CD8-positive, alpha-beta memory T cell (primary cell): ENCODE measurements at regions of chr3 and their contacts with region 1.

Region 1: GRCh38 chr3:66816090-66816761 is 181.9 kb upstream of the KBTBD8 start:
- DNase-seq: peak in 2 of 5 donors; percentile 46 to 48
- H3K4me3 ChIP-seq: no peak overlapping the region
- H3K4me3 Mint-ChIP-seq: no peak overlapping the region
- H3K27ac ChIP-seq: no peak overlapping the region
- H3K27ac Mint-ChIP-seq: no peak overlapping the region
- H3K4me1 ChIP-seq: no peaks in the 10 kb centered on the region
- H3K4me1 Mint-ChIP-seq: no peaks in the 10 kb centered on the region
- H3K27me3 ChIP-seq: no peaks in the 10 kb centered on the region
- H3K27me3 Mint-ChIP-seq: peaks cover 2 to 12% of the 10 kb centered on the region in 2 donors

Region 2: DNA sequence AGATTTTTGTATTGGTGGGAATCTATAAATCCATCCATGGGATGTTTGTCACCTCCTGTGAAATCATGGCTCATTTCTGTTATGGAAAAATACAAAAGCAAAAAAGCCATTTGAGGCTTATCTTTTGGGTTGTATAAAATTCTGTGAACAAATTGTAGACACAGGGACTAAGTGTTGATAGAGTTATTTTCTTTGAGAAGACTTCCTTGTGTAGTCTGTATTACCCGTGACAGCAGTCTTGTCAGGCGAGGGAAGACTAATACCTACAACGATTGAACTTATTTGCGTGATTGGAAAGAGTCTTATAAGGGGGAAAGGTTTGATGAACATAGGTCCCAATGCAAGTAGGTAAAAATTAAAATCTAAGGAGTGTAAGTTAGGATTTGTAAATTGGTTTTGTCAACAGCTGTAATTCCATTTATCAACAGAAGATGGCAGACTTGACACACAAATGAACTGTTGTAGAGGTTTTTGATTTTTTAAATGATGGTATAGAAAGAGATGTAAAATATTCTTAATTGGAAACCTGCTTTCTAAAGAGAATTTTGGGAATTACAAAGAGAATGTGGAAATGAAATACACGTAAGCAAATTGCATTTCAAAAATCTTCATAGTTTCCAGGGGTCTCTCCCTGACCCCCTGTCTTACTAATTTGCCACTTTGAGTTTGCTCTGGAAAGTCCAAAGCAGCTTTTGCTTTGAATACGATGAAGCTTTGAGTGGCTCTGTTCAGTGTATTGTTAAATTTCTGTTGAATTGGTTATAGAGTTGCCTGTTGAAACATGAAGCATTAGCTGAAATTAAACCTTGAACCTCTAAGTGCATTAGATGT is 562.2 kb before region 1 on chr3:
- CTCF ChIA-PET with region 1: interaction called, 67 read pairs
- POLR2A ChIA-PET with region 1: no interaction called
- DNase-seq: peak in 2 of 5 donors; percentile 9 to 21
- H3K4me3 ChIP-seq: no peak overlapping the region
- H3K4me3 Mint-ChIP-seq: no peak overlapping the region
- H3K27ac ChIP-seq: no peak overlapping the region
- H3K27ac Mint-ChIP-seq: no peak overlapping the region
- H3K4me1 ChIP-seq: no peaks in the 10 kb centered on the region
- H3K4me1 Mint-ChIP-seq: peaks cover 0 to 3% (median 2%) of the 10 kb centered on the region in 3 donors
- H3K27me3 ChIP-seq: no peaks in the 10 kb centered on the region
- H3K27me3 Mint-ChIP-seq: no peaks in the 10 kb centered on the region

Region 3: DNA sequence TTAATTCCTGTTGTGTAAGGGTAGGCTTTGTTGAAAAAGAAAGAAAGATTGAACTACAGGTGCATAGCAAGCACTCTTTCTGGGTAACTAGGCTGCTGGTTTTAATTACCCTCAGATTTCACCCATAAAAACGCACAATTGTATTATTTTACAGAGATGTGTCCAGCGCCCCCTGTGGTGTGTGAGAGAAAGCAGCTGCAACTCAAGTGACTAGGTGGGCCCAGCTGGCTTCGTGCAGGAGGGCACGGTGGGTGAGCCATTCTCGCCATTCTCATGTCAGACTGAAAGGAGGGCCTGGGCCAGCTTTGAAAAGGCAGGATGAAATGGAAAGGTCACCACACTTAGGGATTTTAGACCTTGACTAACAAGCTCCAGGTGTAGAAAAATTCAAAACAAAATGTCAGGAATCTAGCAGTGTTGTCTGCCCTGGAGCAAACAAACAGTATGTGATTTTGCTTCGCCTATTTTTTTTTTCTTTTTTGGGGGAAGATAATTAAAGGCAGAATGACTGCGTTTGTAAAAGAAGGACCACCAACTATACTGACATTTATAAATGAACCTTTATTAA is 437.9 kb before region 1 on chr3:
- CTCF ChIA-PET with region 1: interaction called, 11 read pairs
- POLR2A ChIA-PET with region 1: no interaction called
- DNase-seq: peak in 4 of 5 donors; percentile 10 to 44 (median 30)
- H3K4me3 ChIP-seq: no peak overlapping the region
- H3K4me3 Mint-ChIP-seq: peak overlapping the region in 1 of 7 donors; percentile 42
- H3K27ac ChIP-seq: no peak overlapping the region
- H3K27ac Mint-ChIP-seq: peak overlapping the region; percentile 63 to 99 (median 83)
- H3K4me1 ChIP-seq: peaks cover 15% of the 10 kb centered on the region
- H3K4me1 Mint-ChIP-seq: peaks cover 11 to 21% (median 21%) of the 10 kb centered on the region in 3 donors
- H3K27me3 ChIP-seq: no peaks in the 10 kb centered on the region
- H3K27me3 Mint-ChIP-seq: no peaks in the 10 kb centered on the region

Region 4: DNA sequence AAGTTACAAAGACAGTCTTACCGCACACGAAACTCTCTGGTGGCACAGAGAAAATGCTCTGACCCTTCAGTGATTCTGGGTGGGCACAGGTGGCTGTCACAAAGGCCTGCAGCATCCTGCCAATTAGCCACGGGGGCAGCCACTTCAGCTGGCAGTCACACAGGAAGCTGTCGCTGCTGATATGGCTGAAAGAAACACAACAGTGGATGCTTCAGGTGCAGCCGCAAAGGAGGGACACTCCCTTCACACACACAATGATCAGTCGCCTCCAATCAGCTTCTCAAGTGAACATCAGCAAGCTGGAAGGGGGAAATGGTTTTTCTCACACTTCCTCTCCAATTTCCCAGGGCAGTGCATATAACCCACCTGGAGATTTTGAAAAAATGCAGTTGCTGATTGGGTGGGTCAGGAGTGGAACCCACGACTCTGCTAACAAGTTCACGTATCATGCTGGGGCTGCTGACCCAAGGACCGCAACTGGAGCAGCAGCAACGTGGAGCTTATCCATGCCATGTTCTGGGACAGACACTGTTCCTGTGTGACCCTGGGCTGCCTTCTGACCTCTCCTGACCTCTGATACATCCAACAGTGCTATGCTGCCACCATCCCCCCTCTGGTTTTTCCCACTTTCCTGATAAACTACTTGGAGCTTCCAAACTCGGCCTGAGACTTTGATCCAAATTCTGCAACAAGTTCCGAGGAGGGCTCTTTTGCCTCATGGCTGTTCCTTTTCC is 422.0 kb before region 1 on chr3:
- CTCF ChIA-PET with region 1: interaction called, 10 read pairs
- POLR2A ChIA-PET with region 1: no interaction called
- DNase-seq: peak; percentile 42 to 81 (median 54)
- H3K4me3 ChIP-seq: peak overlapping the region; percentile 41
- H3K4me3 Mint-ChIP-seq: peak overlapping the region; percentile 77 to 91 (median 90)
- H3K27ac ChIP-seq: peak overlapping the region; percentile 34
- H3K27ac Mint-ChIP-seq: peak overlapping the region; percentile 88 to 99 (median 96)
- H3K4me1 ChIP-seq: peaks cover 47% of the 10 kb centered on the region
- H3K4me1 Mint-ChIP-seq: peaks cover 53 to 62% (median 61%) of the 10 kb centered on the region in 3 donors
- H3K27me3 ChIP-seq: no peaks in the 10 kb centered on the region
- H3K27me3 Mint-ChIP-seq: no peaks in the 10 kb centered on the region

Region 5: GRCh38 chr3:66407611-66408218 is 408.5 kb before region 1 on chr3:
- CTCF ChIA-PET with region 1: interaction called, 65 read pairs
- POLR2A ChIA-PET with region 1: no interaction called
- DNase-seq: peak; percentile 54 to 79 (median 59)
- H3K4me3 ChIP-seq: no peak overlapping the region
- H3K4me3 Mint-ChIP-seq: no peak overlapping the region
- H3K27ac ChIP-seq: no peak overlapping the region
- H3K27ac Mint-ChIP-seq: peak overlapping the region in 3 of 8 donors; percentile 7 to 45 (median 38)
- H3K4me1 ChIP-seq: no peaks in the 10 kb centered on the region
- H3K4me1 Mint-ChIP-seq: peaks cover 3% of the 10 kb centered on the region in 3 donors
- H3K27me3 ChIP-seq: no peaks in the 10 kb centered on the region
- H3K27me3 Mint-ChIP-seq: no peaks in the 10 kb centered on the region

Region 6: GRCh38 chr3:66804097-66804695 is 12.0 kb before region 1 on chr3:
- CTCF ChIA-PET with region 1: interaction called, 12 read pairs
- POLR2A ChIA-PET with region 1: no interaction called
- DNase-seq: no peak
- H3K4me3 ChIP-seq: no peak overlapping the region
- H3K4me3 Mint-ChIP-seq: no peak overlapping the region
- H3K27ac ChIP-seq: no peak overlapping the region
- H3K27ac Mint-ChIP-seq: no peak overlapping the region
- H3K4me1 ChIP-seq: no peaks in the 10 kb centered on the region
- H3K4me1 Mint-ChIP-seq: peaks cover 4 to 7% (median 5%) of the 10 kb centered on the region in 3 donors
- H3K27me3 ChIP-seq: no peaks in the 10 kb centered on the region
- H3K27me3 Mint-ChIP-seq: peaks cover 5 to 27% of the 10 kb centered on the region in 2 donors